Activated CD4-positive, alpha-beta T cell treated with anti-CD3 and anti-CD28 coated beads for 36 hours (primary cell): ENCODE measurements at regions of chr1 and their contacts with region 1.

Region 1: DNA sequence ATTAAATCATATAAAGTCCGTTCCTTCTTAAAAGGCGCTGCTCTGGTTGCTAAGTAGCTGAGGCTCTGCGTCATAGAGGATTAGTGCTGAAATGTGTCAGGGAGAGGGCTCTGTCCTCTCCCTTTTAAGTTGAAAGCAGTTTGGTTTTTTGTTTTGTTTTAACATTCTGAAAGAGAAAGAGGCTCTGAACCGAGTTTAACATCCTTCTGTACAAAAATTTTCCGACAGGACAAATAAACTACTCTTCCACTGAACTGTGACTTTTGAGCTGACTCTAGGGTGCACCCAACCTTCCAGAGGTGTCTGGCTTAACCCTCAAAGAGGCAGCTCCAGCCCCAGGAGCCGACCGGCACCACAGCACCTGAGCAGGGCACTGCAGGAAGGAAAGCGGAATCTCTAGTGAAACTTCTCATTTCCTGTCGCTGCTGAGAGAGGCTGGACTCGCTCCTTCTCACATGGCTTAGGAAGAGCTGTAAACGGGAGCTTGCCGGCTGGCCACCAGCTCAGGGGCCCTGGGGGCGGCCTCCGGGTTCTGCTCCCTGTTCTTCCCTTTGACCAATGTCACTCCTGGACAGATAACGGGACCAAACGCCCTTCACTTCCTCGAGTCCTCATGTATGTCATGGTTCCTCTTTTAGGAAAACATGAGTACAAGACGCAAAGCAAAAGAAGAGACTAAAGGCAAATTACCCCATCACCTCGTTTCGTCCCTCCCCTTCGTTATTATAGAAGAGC is 1.2 kb downstream of the VAV3 start:
- DNase-seq: peak; percentile 62
- ATAC-seq: peak; percentile 85
- H3K4me3 Mint-ChIP-seq: peak overlapping the region; percentile 84
- H3K27ac Mint-ChIP-seq: peak overlapping the region; percentile 89
- H3K4me1 Mint-ChIP-seq: peaks cover 23% of the 10 kb centered on the region
- H3K27me3 Mint-ChIP-seq: no peaks in the 10 kb centered on the region

Region 2: DNA sequence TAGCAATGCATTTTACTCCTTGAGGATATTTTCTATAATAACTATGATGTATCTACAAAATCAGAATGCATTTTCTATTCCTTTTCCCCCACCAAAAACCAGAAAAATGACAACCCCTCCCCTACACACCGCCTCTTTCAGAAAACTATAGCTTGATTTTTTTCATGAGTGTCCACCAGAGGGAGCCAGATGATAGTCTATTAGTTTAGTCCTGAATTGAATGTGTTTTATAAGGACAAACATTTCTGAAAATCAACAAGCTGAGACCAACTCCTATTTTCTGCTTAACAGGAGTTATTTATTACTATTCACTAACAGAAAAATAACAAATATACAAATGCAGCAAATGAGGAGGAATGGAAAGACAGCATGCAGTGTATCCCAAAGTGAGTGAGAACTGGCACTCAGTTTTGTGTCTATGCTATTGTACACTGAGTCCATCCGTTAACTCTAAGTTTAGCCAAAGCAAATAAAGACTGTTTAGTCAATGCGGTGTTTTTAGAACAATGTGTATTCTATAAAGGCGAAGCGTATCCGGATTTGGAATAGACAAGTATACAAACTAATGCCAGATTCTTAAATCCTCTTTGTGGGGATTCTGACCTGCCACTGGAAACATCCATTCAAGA is 181.4 kb before region 1 on chr1:
- CTCF ChIA-PET with region 1: interaction called, 5 read pairs
- POLR2A ChIA-PET with region 1: no interaction called
- intact Hi-C with region 1: loop called in 1 of 2 experiments (anchors 2 kb)
- DNase-seq: peak; percentile 35
- ATAC-seq: peak; percentile 45
- H3K4me3 Mint-ChIP-seq: no peak overlapping the region
- H3K27ac Mint-ChIP-seq: no peak overlapping the region
- H3K4me1 Mint-ChIP-seq: peaks cover 26% of the 10 kb centered on the region
- H3K27me3 Mint-ChIP-seq: no peaks in the 10 kb centered on the region

Region 3: GRCh38 chr1:107829061-107830040 is 134.4 kb before region 1 on chr1:
- CTCF ChIA-PET with region 1: no interaction called
- POLR2A ChIA-PET with region 1: no interaction called
- intact Hi-C with region 1: loop called in 1 of 2 experiments (anchors 5 kb)
- DNase-seq: no peak
- ATAC-seq: no peak
- H3K4me3 Mint-ChIP-seq: no peak overlapping the region
- H3K27ac Mint-ChIP-seq: no peak overlapping the region
- H3K4me1 Mint-ChIP-seq: peaks cover 23% of the 10 kb centered on the region
- H3K27me3 Mint-ChIP-seq: no peaks in the 10 kb centered on the region

Region 4: GRCh38 chr1:107936498-107937481 is 27.0 kb before region 1 on chr1:
- CTCF ChIA-PET with region 1: interaction called, 5 read pairs
- POLR2A ChIA-PET with region 1: no interaction called
- intact Hi-C with region 1: loop called (anchors 1 kb)
- DNase-seq: peak; percentile 71
- ATAC-seq: peak; percentile 56
- H3K4me3 Mint-ChIP-seq: no peak overlapping the region
- H3K27ac Mint-ChIP-seq: peak overlapping the region; percentile 80
- H3K4me1 Mint-ChIP-seq: peaks cover 66% of the 10 kb centered on the region
- H3K27me3 Mint-ChIP-seq: no peaks in the 10 kb centered on the region

Region 5: GRCh38 chr1:107991371-107992066 is 27.8 kb after region 1 on chr1:
- CTCF ChIA-PET with region 1: no interaction called
- POLR2A ChIA-PET with region 1: no interaction called
- intact Hi-C with region 1: no loop called
- DNase-seq: no peak
- ATAC-seq: no peak
- H3K4me3 Mint-ChIP-seq: no peak overlapping the region
- H3K27ac Mint-ChIP-seq: no peak overlapping the region
- H3K4me1 Mint-ChIP-seq: no peaks in the 10 kb centered on the region
- H3K27me3 Mint-ChIP-seq: peaks cover 1% of the 10 kb centered on the region

Region 6: DNA sequence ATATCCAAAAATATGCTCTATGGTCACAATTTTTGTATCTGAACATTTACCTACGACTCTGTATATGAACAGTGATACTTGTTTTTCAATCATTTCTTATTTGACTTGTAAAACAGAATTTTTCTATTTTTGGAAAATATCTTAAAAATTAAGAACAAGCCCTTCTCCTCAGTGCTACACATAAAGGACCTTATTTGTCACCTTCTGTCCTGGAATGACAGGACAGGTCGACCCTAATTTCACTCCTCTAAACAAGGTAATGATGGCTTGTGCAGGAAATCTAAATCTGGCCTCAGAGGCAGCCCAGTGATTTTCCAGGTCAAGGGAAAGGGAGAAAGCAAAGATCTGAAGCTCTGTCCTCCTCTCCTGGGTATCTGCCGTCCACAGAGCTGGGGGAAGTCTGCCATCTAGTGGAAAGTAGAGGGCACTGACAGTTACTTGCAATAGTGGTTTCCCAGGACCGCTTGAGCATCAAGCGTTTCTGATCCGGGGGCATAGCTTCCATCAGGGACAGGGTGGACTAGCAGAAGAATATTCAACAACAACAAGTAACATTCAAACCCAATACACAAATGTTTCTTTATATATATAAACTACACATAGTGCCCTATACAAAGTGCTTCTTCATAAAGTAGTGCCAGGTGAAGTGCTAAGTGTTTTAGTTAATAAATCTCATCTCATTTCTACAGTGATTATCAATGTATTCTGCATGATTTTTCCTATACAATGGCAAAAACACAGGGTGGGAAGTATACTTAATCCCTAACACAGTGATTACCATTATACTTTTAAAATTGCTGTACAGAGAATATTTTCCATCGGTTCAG is 161.8 kb after region 1 on chr1:
- CTCF ChIA-PET with region 1: interaction called, 13 read pairs
- POLR2A ChIA-PET with region 1: no interaction called
- intact Hi-C with region 1: loop called (anchors 5 kb)
- DNase-seq: peak; percentile 77
- ATAC-seq: peak; percentile 94
- H3K4me3 Mint-ChIP-seq: no peak overlapping the region
- H3K27ac Mint-ChIP-seq: no peak overlapping the region
- H3K4me1 Mint-ChIP-seq: peaks cover 2% of the 10 kb centered on the region
- H3K27me3 Mint-ChIP-seq: no peaks in the 10 kb centered on the region